ENCODE measurements at regions of chr19 and their contacts with region 1.

Region 1: DNA sequence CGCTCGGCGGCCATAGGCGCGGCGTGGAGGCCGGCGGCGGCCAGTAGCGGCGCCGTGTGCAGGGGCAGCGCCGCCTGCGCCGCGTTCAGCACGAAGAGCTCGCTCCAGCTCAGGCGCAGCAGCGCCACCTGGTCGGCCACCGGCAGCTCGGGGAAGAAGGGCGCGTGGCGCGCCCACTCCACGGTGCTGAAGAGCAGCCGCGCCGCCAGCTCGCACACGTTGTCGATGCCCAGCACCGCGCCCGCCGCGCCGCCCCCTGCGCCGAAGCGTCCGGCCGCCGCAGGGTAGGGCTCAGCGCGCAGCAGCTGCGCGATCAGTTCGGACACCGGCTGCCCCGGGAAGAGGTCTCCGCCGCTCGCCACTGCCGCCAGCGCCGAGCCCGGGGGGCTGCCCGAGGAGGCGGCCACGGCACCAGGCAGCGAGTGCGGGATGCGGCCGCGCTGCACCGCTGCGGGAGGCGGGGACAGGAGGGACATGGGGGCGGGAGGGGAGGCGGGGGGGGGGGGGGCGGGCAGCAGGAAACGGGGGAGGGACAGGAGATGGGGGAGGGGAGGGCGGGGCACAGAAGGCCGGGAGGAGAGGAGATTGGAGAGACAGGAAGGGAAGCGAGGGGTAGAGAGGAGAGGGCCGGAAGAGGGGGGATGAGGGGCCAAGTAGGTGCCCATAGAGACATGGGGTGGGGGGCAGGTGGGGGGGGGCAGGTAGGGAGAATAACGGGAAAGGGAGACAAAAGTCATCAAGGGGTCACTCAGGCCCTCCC is 9.8 kb downstream of the OCEL1 start:
- DNase-seq: peak; percentile 79
- H3K4me3 Mint-ChIP-seq: peak overlapping the region; percentile 83
- H3K27ac Mint-ChIP-seq: peak overlapping the region; percentile 68
- H3K4me1 Mint-ChIP-seq: peaks cover 19% of the 10 kb centered on the region
- H3K27me3 Mint-ChIP-seq: no peaks in the 10 kb centered on the region

Region 2: DNA sequence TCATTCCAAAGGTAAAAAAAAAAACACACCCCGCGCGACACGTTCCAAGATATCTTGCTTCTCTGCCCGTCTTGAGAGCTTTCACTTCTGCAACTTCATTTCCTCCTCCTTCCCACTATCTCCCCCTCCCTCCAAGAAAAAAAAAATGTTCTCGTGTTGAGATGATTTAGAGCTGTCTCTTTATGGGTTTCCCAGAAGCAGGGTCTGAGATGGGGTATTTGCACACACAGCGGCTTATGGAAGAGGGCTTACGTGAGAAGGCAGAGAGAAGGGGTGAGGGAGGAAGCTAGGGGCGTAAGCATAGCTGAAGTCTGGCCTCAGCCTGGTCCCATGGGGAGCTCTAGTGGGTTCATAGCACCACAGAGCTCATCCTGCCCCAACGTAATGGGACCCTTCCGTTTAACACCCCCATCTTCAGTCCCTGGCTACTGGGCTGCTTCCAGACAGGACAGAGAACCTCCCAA is 51.9 kb before region 1 on chr19:
- CTCF ChIA-PET with region 1: no interaction called
- intact Hi-C with region 1: loop called (anchors 5 kb)
- DNase-seq: peak; percentile 38
- H3K4me3 Mint-ChIP-seq: peak overlapping the region; percentile 66
- H3K27ac Mint-ChIP-seq: peak overlapping the region; percentile 84
- H3K4me1 Mint-ChIP-seq: peaks cover 19% of the 10 kb centered on the region
- H3K27me3 Mint-ChIP-seq: no peaks in the 10 kb centered on the region

Region 3: DNA sequence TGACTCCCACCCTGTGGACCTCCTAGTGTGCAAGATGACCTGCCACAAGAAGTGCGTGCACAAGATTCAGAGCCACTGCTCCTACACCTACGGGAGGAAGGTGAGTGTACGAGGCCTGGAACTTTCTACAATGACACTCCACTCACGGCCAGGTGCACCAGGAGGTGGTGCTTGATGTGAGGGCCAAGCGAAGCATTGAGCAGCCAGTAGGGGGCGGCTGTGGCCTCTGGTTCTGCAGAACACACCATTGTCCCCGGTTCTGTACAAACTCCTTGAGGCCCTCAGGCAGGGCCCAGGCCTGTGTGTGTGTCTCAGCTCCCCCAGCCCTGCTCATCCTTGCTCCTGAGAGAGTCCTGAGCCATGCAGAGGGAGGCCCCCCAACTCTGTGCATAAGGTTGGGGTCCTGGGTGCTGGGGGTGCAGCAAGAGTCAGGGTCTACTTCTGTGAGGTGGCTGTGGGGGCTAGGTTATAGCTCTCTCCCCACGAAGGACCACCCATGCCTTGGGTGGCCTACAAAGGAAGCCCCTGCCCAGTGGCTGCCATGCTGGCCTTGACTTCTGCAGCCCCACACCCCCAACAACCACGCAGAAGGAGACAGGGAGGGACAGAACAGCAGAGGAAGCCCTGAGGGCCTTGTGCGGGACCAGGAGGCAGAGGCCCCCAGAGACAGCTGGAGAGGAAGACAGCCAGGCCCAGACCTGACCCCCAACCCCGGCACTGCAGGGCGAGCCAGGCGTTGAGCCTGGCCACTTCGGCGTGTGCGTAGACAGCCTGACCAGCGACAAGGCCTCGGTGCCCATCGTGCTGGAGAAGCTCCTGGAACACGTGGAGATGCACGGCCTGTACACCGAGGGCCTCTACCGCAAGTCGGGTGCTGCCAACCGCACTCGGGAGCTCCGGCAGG is 30.3 kb before region 1 on chr19:
- CTCF ChIA-PET with region 1: interaction called, 5 read pairs
- intact Hi-C with region 1: loop called (anchors 1 kb)
- DNase-seq: peak; percentile 73
- H3K4me3 Mint-ChIP-seq: no peak overlapping the region
- H3K27ac Mint-ChIP-seq: no peak overlapping the region
- H3K4me1 Mint-ChIP-seq: peaks cover 4% of the 10 kb centered on the region
- H3K27me3 Mint-ChIP-seq: no peaks in the 10 kb centered on the region